PC-3 (cell line): ENCODE measurements at regions of chr1 and their contacts with region 1.

Region 1: GRCh38 chr1:238960071-238960470 is 426.3 kb upstream of the CHRM3 start:
- DNase-seq: peak; percentile 97
- ATAC-seq: peak; percentile 61
- H3K4me3 ChIP-seq: peak overlapping the region; percentile 22; the same call in 1 of the 2 replicates
- H3K27ac ChIP-seq: peak overlapping the region; percentile 91
- H3K4me1 ChIP-seq: peaks cover 38% of the 10 kb centered on the region
- H3K27me3 ChIP-seq: no peaks in the 10 kb centered on the region
- CTCF ChIP-seq: no peak

Region 2: DNA sequence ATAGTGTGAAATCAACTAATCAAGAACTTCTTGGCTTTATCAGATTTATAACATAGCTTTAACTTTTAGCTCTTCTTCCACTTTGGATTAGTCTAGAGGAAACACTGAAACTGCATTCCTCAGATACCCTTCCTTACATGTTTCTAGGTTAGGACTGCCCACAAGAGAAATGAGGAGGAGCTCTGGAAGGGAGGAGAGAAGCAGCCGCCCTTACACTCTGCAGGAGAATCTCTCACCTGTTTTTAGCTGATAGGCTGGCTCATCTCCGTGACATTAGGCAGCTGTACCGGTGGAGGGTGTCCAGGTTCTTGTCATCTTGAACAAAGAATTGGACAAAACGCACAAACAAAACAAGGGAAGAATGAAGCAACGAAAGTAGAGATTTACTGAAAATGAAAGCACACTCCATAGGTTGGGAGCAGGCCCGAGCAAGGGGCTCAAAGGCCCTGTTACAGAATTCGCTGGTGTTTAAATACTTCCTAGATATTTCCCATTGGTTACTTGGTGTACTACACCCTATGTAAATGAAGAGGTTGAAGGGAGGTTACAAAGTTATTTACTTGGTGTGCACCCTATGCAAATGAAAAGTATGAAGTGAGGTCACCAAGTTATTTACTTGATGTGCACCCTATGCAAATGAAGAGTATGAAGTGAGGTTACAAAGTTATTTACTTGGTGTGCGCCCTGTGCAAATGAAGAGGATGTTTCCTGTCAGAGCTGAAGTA is 98.6 kb before region 1 on chr1:
- CTCF ChIA-PET with region 1: no interaction called
- POLR2A ChIA-PET with region 1: no interaction called
- intact Hi-C with region 1: no loop called
- DNase-seq: no peak
- ATAC-seq: no peak
- H3K4me3 ChIP-seq: no peak overlapping the region
- H3K27ac ChIP-seq: no peak overlapping the region
- H3K4me1 ChIP-seq: no peaks in the 10 kb centered on the region
- H3K27me3 ChIP-seq: no peaks in the 10 kb centered on the region
- CTCF ChIP-seq: no peak

Region 3: GRCh38 chr1:238895911-238896310 is 64.2 kb before region 1 on chr1:
- CTCF ChIA-PET with region 1: no interaction called
- POLR2A ChIA-PET with region 1: no interaction called
- intact Hi-C with region 1: loop called (anchors 1 kb)
- DNase-seq: peak; percentile 80
- ATAC-seq: peak; percentile 47
- H3K4me3 ChIP-seq: no peak overlapping the region
- H3K27ac ChIP-seq: peak overlapping the region; percentile 41; the same call in 1 of the 2 replicates
- H3K4me1 ChIP-seq: peaks cover 38% of the 10 kb centered on the region
- H3K27me3 ChIP-seq: no peaks in the 10 kb centered on the region
- CTCF ChIP-seq: no peak

Region 4: DNA sequence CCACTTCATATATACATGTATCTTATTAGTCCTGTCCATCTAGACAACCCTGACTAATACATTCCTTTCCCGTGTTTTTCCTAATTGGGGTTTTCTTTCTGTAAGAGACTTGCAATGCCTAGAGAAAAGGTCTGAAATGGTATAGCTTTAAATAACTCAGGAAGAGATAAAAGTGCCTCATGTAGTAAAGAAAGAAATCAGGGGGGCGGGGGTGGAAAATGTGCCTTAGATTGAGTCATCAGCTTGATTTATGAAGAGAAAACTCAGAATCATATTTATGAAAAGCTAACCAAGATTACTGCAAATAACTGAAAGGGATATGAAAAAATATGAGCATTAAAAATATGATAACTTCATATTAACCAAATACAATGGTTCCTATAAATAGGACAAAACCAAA is 80.5 kb after region 1 on chr1:
- CTCF ChIA-PET with region 1: no interaction called
- POLR2A ChIA-PET with region 1: no interaction called
- intact Hi-C with region 1: loop called (anchors 2 kb)
- DNase-seq: no peak
- ATAC-seq: peak; percentile 50
- H3K4me3 ChIP-seq: no peak overlapping the region
- H3K27ac ChIP-seq: no peak overlapping the region
- H3K4me1 ChIP-seq: no peaks in the 10 kb centered on the region
- H3K27me3 ChIP-seq: no peaks in the 10 kb centered on the region
- CTCF ChIP-seq: no peak

Region 5: GRCh38 chr1:239053279-239053678 is 93.2 kb after region 1 on chr1:
- CTCF ChIA-PET with region 1: no interaction called
- POLR2A ChIA-PET with region 1: no interaction called
- intact Hi-C with region 1: no loop called
- DNase-seq: no peak
- ATAC-seq: no peak
- H3K4me3 ChIP-seq: no peak overlapping the region
- H3K27ac ChIP-seq: no peak overlapping the region
- H3K4me1 ChIP-seq: no peaks in the 10 kb centered on the region
- H3K27me3 ChIP-seq: no peaks in the 10 kb centered on the region
- CTCF ChIP-seq: no peak

Region 6: GRCh38 chr1:239140968-239141367 is 180.9 kb after region 1 on chr1:
- CTCF ChIA-PET with region 1: no interaction called
- POLR2A ChIA-PET with region 1: no interaction called
- intact Hi-C with region 1: no loop called
- DNase-seq: no peak
- ATAC-seq: no peak
- H3K4me3 ChIP-seq: no peak overlapping the region
- H3K27ac ChIP-seq: no peak overlapping the region
- H3K4me1 ChIP-seq: no peaks in the 10 kb centered on the region
- H3K27me3 ChIP-seq: no peaks in the 10 kb centered on the region
- CTCF ChIP-seq: no peak

Region 7: DNA sequence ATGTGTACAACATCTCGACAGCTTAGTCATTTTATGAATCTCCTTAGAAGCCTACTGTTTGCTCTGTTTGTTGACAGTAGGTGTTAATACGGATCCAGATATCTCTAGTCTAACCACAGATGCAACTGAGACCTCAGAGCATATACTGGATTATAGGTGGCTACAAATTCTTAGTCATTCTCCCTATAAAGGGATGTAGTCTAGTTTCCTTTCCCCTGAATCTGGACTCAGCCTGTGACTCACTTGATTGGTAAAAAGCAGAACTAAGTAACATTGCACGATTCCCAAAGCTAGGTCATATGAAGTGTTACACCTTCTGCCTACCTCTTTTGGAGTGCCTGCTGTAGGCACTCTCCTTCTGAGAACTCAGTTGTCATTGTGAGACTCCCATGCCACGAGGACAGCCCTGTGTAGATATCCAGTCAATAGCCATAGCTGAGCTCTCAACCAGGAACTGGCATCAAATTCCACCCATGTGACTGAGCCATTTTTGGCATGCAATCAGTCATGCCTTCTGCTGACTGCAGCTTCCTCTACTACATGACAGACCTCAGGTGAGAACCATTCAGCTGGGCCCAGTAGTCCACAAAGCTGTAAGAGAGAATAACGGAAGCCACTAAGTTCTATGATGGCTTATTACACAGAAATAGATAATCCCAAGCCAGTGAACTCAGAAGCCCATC is 290.4 kb after region 1 on chr1:
- CTCF ChIA-PET with region 1: no interaction called
- POLR2A ChIA-PET with region 1: no interaction called
- intact Hi-C with region 1: loop called (anchors 2 kb)
- DNase-seq: peak; percentile 98
- ATAC-seq: peak; percentile 97
- H3K4me3 ChIP-seq: no peak overlapping the region
- H3K27ac ChIP-seq: peak overlapping the region; percentile 92
- H3K4me1 ChIP-seq: peaks cover 40% of the 10 kb centered on the region
- H3K27me3 ChIP-seq: no peaks in the 10 kb centered on the region
- CTCF ChIP-seq: no peak

Region 8: DNA sequence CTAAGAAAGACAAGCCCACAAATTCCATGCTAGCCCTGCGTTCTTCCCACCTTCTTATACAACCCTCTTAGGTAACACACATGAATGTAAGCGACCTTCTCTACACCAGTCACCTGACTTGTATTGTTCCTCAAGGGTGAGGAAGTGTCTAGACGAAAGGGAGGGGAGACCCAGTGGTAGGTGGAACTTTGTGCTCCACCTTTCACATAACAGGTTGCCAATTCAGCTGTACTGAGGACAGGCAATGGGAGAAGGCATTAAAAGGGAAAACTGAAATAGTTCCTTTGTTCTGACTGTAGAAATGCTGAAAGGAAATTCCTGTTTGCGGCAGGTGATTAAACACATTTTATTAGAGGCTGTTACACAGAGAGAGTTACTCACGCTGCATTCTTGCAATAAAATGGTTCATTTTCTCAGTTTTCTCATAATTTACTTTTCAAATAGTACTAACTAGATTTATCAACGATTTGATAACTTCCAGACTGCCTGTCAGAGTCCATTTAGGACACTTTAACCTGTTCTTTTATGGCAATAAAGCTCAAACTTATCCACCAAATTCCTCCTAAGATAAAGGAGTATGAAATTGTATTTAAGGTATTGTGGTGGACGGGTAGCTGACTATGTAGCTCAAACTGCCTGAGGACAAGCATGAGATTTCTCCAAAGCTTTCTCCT is 408.5 kb after region 1 on chr1:
- CTCF ChIA-PET with region 1: no interaction called
- POLR2A ChIA-PET with region 1: no interaction called
- intact Hi-C with region 1: loop called (anchors 2 kb)
- DNase-seq: peak; percentile 78
- ATAC-seq: peak; percentile 97
- H3K4me3 ChIP-seq: peak overlapping the region; percentile 14; the same call in 1 of the 2 replicates
- H3K27ac ChIP-seq: 0 out of 2 replicates have a peak overlapping the region, but pooled peaks have one; percentile 10
- H3K4me1 ChIP-seq: peaks cover 17% of the 10 kb centered on the region; the same call in 1 of the 2 replicates
- H3K27me3 ChIP-seq: no peaks in the 10 kb centered on the region
- CTCF ChIP-seq: no peak

Region 9: DNA sequence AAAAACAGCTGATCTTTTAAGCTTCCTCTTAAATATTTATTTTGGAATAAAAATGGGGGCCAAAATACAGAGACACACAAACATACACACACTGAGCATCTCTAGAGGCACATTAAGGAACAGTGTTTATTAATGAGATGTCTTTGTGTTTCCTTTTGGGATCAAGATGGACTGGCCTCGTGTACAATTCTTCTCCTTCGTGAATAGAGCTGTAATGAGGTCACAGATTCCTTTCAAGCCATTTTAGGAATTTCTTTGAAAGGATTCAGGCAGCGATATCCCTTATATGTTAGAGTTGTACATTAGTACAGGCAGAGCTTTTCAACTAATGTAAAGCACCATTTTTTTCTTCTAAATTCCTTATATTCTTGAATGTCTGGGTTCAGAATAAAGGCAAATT is 722.0 kb after region 1 on chr1:
- CTCF ChIA-PET with region 1: no interaction called
- POLR2A ChIA-PET with region 1: no interaction called
- intact Hi-C with region 1: loop called (anchors 10 kb)
- DNase-seq: no peak
- ATAC-seq: no peak
- H3K4me3 ChIP-seq: no peak overlapping the region
- H3K27ac ChIP-seq: peak overlapping the region; percentile 57
- H3K4me1 ChIP-seq: peaks cover 30% of the 10 kb centered on the region
- H3K27me3 ChIP-seq: no peaks in the 10 kb centered on the region
- CTCF ChIP-seq: no peak

Region 10: DNA sequence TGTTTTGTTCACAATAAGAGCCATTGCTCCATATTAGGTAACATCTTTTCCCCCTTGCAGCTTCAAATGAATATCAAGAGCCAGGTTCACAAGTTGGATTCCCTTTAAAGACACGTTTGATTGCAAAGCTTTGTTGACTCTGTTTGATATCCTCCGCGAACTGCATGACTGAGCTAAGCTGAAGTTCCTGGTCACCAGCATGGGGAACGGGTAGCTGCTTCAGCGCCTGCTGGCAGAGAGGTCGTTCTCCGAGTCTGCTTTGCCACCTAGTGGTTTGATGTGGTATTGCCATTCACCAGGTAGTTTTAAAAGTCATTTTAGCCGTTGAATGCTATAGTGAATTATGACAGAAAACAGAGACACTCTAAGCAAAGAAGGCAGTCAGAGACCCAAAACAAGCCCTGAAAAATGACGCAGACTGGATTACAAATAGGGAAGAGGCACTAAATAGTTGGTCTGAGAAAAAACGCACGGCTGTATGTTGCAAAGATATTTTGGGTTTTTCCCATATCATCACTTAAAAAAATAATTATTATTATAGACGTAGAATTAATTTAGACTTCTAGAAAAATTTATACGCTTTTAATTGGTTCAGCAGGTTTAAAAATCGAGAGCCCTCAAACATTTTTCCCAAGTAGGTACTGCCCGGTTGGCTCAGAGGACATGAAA is 938.1 kb after region 1 on chr1:
- CTCF ChIA-PET with region 1: no interaction called
- POLR2A ChIA-PET with region 1: no interaction called
- intact Hi-C with region 1: loop called (anchors 5 kb)
- DNase-seq: peak; percentile 94
- ATAC-seq: peak; percentile 84
- H3K4me3 ChIP-seq: no peak overlapping the region
- H3K27ac ChIP-seq: no peak overlapping the region
- H3K4me1 ChIP-seq: peaks cover 15% of the 10 kb centered on the region
- H3K27me3 ChIP-seq: no peaks in the 10 kb centered on the region
- CTCF ChIP-seq: peak; percentile 99